ENCODE measurements at regions of chr21 and their contacts with region 1.

Region 1: DNA sequence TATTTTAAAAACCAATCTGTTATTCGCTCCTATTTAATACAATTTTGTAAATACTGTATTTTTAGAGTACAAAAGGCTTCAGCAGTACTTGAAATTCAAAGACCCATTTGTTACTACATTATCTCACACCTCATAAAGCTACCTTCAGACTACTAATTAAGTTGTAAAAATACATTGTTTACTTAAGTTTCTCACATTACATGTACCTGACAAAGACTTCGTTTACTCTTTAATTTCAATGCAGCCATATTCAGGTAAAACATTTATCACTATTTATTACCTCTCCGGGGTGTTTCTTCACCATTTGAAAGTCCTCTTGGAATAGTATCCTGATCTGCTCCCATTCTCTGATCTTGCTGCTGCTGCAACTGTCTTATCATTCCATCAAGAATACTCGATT is 55.2 kb downstream of the BRWD1 start:
- DNase-seq: no peak
- ATAC-seq: no peak
- H3K4me3 ChIP-seq: no peak overlapping the region
- H3K4me3 Mint-ChIP-seq: no peak overlapping the region
- H3K27ac ChIP-seq: no peak overlapping the region
- H3K27ac Mint-ChIP-seq: no peak overlapping the region
- H3K4me1 ChIP-seq: no peaks in the 10 kb centered on the region
- H3K4me1 Mint-ChIP-seq: peaks cover 15% of the 10 kb centered on the region
- H3K27me3 ChIP-seq: no peaks in the 10 kb centered on the region
- H3K27me3 Mint-ChIP-seq: no peaks in the 10 kb centered on the region
- CTCF ChIP-seq: no peak

Region 2: DNA sequence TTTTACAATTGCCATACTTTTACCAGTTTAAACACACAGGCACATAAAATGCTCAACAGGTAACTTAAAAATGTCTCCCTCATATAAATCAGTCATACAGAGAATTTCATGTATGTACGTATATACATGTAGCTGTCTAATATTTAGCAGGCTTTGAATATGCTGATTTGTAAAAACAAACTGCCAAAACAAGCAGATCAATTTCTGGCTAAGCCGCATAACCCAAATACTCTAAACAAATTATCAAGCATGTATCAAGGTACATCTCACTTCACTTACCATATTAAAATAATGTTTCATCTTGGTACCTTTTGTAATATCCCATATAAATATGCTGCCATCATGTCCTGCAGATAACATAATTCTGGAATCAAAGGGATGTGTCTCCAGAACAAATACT is 11.4 kb after region 1 on chr21:
- CTCF ChIA-PET with region 1: no interaction called
- POLR2A ChIA-PET with region 1: no interaction called
- intact Hi-C with region 1: loop called in 1 of 2 experiments (anchors 2 kb)
- DNase-seq: no peak
- ATAC-seq: no peak
- H3K4me3 ChIP-seq: no peak overlapping the region
- H3K4me3 Mint-ChIP-seq: no peak overlapping the region
- H3K27ac ChIP-seq: no peak overlapping the region
- H3K27ac Mint-ChIP-seq: no peak overlapping the region
- H3K4me1 ChIP-seq: no peaks in the 10 kb centered on the region
- H3K4me1 Mint-ChIP-seq: no peaks in the 10 kb centered on the region
- H3K27me3 ChIP-seq: no peaks in the 10 kb centered on the region
- H3K27me3 Mint-ChIP-seq: no peaks in the 10 kb centered on the region
- CTCF ChIP-seq: no peak

Region 3: GRCh38 chr21:39288987-39289386 is 30.8 kb after region 1 on chr21:
- CTCF ChIA-PET with region 1: no interaction called
- POLR2A ChIA-PET with region 1: no interaction called
- intact Hi-C with region 1: no loop called
- DNase-seq: no peak
- ATAC-seq: no peak
- H3K4me3 ChIP-seq: no peak overlapping the region
- H3K4me3 Mint-ChIP-seq: no peak overlapping the region
- H3K27ac ChIP-seq: no peak overlapping the region
- H3K27ac Mint-ChIP-seq: no peak overlapping the region
- H3K4me1 ChIP-seq: no peaks in the 10 kb centered on the region
- H3K4me1 Mint-ChIP-seq: no peaks in the 10 kb centered on the region
- H3K27me3 ChIP-seq: no peaks in the 10 kb centered on the region
- H3K27me3 Mint-ChIP-seq: no peaks in the 10 kb centered on the region
- CTCF ChIP-seq: no peak

Measured in CD4-positive, alpha-beta T cell (primary cell).